ENCODE measurements at regions of chr6 and their contacts with region 1.

Region 1: DNA sequence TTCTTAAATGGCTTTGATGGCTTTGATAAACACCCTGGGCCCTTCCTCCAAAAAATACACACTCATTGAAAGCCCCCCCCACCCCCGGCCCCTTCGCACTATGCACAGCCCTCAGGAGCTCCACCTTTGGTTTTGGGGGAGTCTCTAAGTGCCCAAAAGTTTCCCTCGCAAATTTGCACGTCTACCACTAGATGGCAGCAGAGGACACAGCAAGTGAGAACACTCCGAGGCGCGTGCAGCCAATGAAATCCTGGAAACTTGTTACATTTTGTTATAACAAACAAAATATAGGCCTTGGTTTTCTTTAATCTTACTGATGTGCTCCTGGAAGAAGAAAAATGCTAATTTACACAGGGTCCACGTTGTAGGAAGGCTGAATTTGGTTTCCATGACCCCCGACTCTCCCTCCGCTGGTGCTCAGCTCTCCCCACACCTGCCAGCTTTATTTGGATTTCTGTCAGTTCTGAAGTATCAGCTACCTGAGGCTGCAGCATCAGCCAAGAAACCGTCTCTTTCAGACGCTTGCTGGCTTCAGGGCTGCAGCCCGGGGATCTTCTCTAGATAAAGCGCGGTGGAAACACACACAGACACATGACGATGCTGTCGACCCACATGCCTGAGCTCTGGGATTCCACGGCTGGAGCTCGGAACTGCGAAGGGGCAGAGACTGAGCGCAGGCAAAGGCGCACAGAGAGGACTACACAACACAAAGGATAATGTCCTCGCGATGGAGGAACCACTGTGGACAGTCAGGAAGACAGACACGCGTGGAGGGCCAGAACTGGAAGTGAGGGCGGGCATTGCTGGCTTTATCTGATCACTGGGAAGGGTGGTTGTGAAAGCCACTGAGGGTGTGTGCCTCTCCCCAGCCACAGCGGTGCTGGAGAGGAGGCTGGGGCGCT is 148.4 kb upstream of the RPS6KA2 start:
- DNase-seq: peak; percentile 82 to 92 (median 89)
- H3K4me3 ChIP-seq: no peak overlapping the region
- H3K27ac ChIP-seq: no peak overlapping the region
- H3K4me1 ChIP-seq: peaks cover 0 to 5% (median 4%) of the 10 kb centered on the region in 4 experiments
- H3K27me3 ChIP-seq: peaks cover 0 to 22% (median 0%) of the 10 kb centered on the region in 5 experiments

Region 2: DNA sequence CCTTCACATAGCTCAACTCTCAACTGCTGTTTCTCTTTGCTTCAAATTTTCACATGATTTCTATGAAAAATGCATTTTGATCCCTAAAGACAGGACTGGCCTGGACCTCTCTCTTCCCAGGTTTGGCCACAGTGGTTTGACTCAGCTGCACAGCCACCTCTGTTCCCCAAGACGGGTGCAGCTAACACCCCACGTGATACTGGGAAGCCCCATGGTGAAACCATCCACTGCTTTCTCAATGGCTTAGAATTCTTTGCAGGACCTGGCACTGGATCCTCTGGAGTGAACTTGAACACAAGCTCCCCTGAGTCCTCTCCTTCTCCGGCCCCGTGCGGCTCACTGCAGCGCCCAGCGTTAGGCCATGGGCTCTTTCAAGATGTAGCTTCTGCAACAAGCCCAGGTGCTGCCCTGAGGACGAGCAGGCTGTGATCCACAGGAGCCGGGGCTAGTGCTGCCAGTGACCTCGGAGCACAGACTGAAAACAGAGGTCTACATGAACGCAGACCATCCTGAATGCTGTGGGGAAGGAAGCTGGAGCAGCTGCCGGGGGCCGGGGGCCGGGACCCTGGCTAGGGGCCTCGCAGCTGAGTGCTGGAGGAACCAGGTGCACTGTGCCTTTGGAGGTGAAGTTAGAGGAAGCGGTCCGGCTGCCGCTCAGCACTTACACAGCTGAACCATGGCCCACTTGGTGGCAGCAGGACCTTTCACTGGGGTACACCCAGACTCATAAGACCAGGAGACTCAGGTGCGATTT is 333.9 kb before region 1 on chr6:
- CTCF ChIA-PET with region 1: interaction called, 21 read pairs
- POLR2A ChIA-PET with region 1: no interaction called
- DNase-seq: peak in 2 of 3 donors; percentile 85 to 89
- H3K4me3 ChIP-seq: peak overlapping the region in 2 of 7 experiments; percentile 24 to 31
- H3K27ac ChIP-seq: no peak overlapping the region
- H3K4me1 ChIP-seq: peaks cover 16 to 61% (median 57%) of the 10 kb centered on the region in 4 experiments
- H3K27me3 ChIP-seq: no peaks in the 10 kb centered on the region

Region 3: GRCh38 chr6:166763606-166764472 is 11.6 kb before region 1 on chr6:
- CTCF ChIA-PET with region 1: interaction called, 25 read pairs
- POLR2A ChIA-PET with region 1: no interaction called
- DNase-seq: no peak
- H3K4me3 ChIP-seq: no peak overlapping the region
- H3K27ac ChIP-seq: no peak overlapping the region
- H3K4me1 ChIP-seq: no peaks in the 10 kb centered on the region
- H3K27me3 ChIP-seq: peaks cover 0 to 6% (median 0%) of the 10 kb centered on the region in 5 experiments

Region 4: GRCh38 chr6:166989427-166990032 is 214.1 kb after region 1 on chr6:
- CTCF ChIA-PET with region 1: interaction called, 59 read pairs
- POLR2A ChIA-PET with region 1: interaction called, 3 read pairs
- DNase-seq: peak; percentile 45 to 79 (median 77)
- H3K4me3 ChIP-seq: no peak overlapping the region
- H3K27ac ChIP-seq: no peak overlapping the region
- H3K4me1 ChIP-seq: peaks cover 0 to 4% (median 0%) of the 10 kb centered on the region in 4 experiments
- H3K27me3 ChIP-seq: peaks cover 0 to 2% (median 0%) of the 10 kb centered on the region in 5 experiments